ENCODE measurements at regions of chr17 and their contacts with region 1.

Region 1: GRCh38 chr17:76726231-76726775 is at the start of gene JMJD6:
- DNase-seq: peak in 11 of 14 experiments; percentile 88 to 98 (median 92)
- ATAC-seq: peak; percentile 81
- H3K4me3 ChIP-seq: peak within 1 kb of the TSS; percentile 77
- H3K4me3 Mint-ChIP-seq: peak within 1 kb of the TSS; percentile 100
- H3K27ac ChIP-seq: peak within 1 kb of the TSS; percentile 93 to 97
- H3K27ac Mint-ChIP-seq: peak within 1 kb of the TSS; percentile 99
- H3K4me1 ChIP-seq: peaks cover 80% of the 10 kb centered on the region
- H3K4me1 Mint-ChIP-seq: peaks cover 50% of the 10 kb centered on the region
- H3K27me3 ChIP-seq: no peaks in the 10 kb centered on the region
- H3K27me3 Mint-ChIP-seq: no peaks in the 10 kb centered on the region
- CTCF ChIP-seq: no peak
- total RNA-seq, gene JMJD6: 133 to 134 TPM

Region 2: DNA sequence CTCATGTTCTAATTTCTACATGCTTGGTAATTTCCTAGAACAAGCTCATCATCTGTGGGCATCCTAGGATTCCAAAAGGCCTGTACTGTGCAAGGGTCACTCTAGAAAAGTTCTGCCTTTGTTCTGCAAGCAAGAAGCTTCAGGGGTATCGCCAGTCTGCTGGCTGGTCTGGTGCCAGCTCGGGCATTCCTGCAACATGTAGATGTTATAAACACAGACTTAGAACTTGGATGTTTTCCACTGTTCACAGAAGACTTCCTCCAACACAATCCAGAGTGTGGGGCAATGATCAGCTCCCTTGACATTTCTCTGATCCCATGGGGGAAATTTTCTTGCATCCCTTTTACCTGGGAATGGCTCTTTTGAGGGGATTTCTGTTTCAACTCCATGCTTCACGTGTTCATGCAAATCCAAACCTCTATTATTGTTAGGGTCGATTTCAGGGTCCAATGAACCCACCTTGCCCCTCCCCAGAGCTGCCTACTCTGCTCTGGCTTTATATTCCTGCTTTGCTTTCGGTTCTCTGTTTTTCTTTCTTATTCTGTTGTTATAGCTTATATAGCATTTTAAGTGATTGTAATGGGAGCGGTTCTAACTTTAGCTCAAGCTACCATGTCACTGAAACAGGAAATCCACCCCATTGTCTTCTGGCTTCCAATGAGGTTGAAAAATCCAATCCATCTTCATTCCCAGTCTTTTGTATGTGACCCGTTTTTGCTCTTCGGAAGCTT is 298.6 kb before region 1 on chr17:
- CTCF ChIA-PET with region 1: no interaction called
- POLR2A ChIA-PET with region 1: no interaction called
- intact Hi-C with region 1: no loop called
- DNase-seq: no peak
- ATAC-seq: no peak
- H3K4me3 ChIP-seq: no peak overlapping the region
- H3K4me3 Mint-ChIP-seq: no peak overlapping the region
- H3K27ac ChIP-seq: no peak overlapping the region
- H3K27ac Mint-ChIP-seq: no peak overlapping the region
- H3K4me1 ChIP-seq: no peaks in the 10 kb centered on the region
- H3K4me1 Mint-ChIP-seq: peaks cover 26% of the 10 kb centered on the region
- H3K27me3 ChIP-seq: no peaks in the 10 kb centered on the region
- H3K27me3 Mint-ChIP-seq: no peaks in the 10 kb centered on the region
- CTCF ChIP-seq: no peak

Region 3: DNA sequence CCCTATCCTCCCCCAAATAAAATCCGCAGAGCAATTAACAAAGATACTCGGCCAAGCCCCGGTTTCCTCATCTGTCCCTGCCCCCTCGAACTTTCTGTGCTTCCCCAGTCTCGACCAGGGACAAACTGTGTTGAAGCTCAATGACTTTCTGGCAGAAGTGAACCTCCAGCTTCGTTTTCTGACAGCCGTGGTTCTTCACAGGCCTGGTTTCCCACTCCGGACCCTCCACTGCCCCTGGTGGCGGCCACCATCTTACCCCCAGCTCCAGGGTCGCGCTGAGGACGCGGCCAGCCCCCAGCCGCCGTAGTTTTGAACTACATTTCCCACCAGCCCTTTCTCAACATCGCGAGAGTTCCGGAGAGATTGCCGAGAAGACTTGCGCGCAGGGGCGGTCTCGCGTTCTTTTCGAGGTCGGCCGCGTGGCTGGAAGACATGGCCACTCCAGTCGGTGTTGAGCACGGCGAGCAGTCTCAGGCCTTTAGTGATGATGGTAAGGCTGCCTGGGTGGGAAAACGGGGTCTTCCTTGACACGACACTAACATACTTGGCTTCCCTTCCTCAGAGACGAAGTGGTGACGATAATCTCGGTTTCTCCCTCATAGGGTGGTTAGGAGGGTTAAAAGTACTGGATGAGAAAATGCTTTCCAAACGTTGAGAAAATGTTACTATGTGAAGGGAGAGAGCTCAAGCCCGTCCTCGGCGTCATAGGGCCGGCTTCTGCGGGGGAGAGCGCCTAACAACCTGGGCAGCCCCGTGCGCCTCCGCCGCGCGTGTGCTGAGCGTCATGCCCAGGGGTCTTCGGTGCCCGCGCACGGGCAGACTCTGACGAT is 168.7 kb before region 1 on chr17:
- CTCF ChIA-PET with region 1: no interaction called
- POLR2A ChIA-PET with region 1: interaction called, 12 read pairs
- intact Hi-C with region 1: no loop called
- DNase-seq: peak; percentile 86 to 97 (median 90)
- ATAC-seq: peak; percentile 82
- H3K4me3 ChIP-seq: peak overlapping the region; percentile 95
- H3K4me3 Mint-ChIP-seq: peak overlapping the region; percentile 96
- H3K27ac ChIP-seq: peak overlapping the region; percentile 93 to 97
- H3K27ac Mint-ChIP-seq: peak overlapping the region; percentile 97
- H3K4me1 ChIP-seq: peaks cover 58% of the 10 kb centered on the region
- H3K4me1 Mint-ChIP-seq: peaks cover 58% of the 10 kb centered on the region
- H3K27me3 ChIP-seq: no peaks in the 10 kb centered on the region
- H3K27me3 Mint-ChIP-seq: no peaks in the 10 kb centered on the region
- CTCF ChIP-seq: peak; percentile 35

Region 4: GRCh38 chr17:76714822-76715495 is 11.3 kb before region 1 on chr17:
- CTCF ChIA-PET with region 1: interaction called, 34 read pairs
- POLR2A ChIA-PET with region 1: interaction called, 52 read pairs
- intact Hi-C with region 1: loop called in 1 of 2 experiments (anchors 1 kb)
- DNase-seq: peak; percentile 64 to 87 (median 79)
- ATAC-seq: no peak
- H3K4me3 ChIP-seq: no peak overlapping the region
- H3K4me3 Mint-ChIP-seq: peak overlapping the region; percentile 3
- H3K27ac ChIP-seq: no peak overlapping the region
- H3K27ac Mint-ChIP-seq: peak overlapping the region; percentile 96
- H3K4me1 ChIP-seq: peaks cover 33% of the 10 kb centered on the region
- H3K4me1 Mint-ChIP-seq: peaks cover 42% of the 10 kb centered on the region
- H3K27me3 ChIP-seq: no peaks in the 10 kb centered on the region
- H3K27me3 Mint-ChIP-seq: no peaks in the 10 kb centered on the region
- CTCF ChIP-seq: peak; percentile 88

Region 5: DNA sequence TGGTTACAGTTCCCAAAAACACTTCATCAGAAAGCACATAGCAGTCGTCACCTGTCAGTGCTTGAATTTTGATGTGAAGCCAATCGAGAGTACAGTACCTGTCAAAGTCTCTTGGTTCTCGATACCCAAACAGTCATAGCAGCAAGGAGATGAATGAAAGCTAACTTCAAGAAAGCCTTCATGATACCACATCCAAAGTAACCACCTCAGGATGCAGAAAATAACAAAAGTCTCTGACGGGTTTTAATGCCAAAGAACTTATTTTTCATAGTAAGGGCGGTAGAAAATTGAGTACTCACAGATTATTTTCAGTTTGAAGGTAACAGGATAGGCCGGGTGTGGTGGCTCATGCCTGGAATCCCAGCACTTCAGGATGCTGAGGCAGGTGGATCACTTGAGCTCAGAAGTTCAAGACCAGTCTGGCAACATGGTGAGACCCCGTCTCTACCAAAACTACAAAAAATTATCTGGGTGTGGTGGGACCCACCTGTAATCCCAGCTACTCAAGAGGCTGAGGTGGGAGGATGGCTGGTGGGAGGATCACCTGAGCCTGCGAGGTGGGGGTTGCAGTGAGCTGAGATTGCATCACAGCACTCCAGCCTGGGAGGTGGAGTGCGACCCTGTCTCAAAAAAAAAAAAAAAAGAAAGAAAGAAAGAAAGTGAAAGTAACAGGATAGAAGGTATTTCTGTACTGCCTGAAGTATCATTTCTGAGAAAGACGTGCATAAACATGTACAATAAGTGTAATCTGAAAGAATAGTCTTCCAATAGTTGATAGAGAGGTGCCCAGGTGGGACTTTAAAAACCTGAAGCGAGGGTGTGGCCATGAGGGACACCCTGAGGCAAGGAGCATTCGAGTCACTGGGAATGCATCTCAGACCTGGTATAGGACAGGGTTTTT is 27.0 kb after region 1 on chr17:
- CTCF ChIA-PET with region 1: interaction called, 4 read pairs
- POLR2A ChIA-PET with region 1: interaction called, 31 read pairs
- intact Hi-C with region 1: no loop called
- DNase-seq: peak in 10 of 14 experiments; percentile 14 to 81 (median 30)
- ATAC-seq: peak; percentile 87
- H3K4me3 ChIP-seq: peak overlapping the region; percentile 54
- H3K4me3 Mint-ChIP-seq: peak overlapping the region; percentile 84
- H3K27ac ChIP-seq: peak overlapping the region; percentile 82 to 84
- H3K27ac Mint-ChIP-seq: peak overlapping the region; percentile 96
- H3K4me1 ChIP-seq: peaks cover 34% of the 10 kb centered on the region
- H3K4me1 Mint-ChIP-seq: peaks cover 24% of the 10 kb centered on the region
- H3K27me3 ChIP-seq: no peaks in the 10 kb centered on the region
- H3K27me3 Mint-ChIP-seq: no peaks in the 10 kb centered on the region
- CTCF ChIP-seq: no peak

Region 6: GRCh38 chr17:76816590-76817135 is 90.4 kb after region 1 on chr17:
- CTCF ChIA-PET with region 1: no interaction called
- POLR2A ChIA-PET with region 1: no interaction called
- intact Hi-C with region 1: loop called in 1 of 2 experiments (anchors 1 kb)
- DNase-seq: peak; percentile 43 to 77 (median 56)
- ATAC-seq: peak; percentile 98
- H3K4me3 ChIP-seq: no peak overlapping the region
- H3K4me3 Mint-ChIP-seq: no peak overlapping the region
- H3K27ac ChIP-seq: no peak overlapping the region
- H3K27ac Mint-ChIP-seq: no peak overlapping the region
- H3K4me1 ChIP-seq: peaks cover 7% of the 10 kb centered on the region
- H3K4me1 Mint-ChIP-seq: peaks cover 9% of the 10 kb centered on the region
- H3K27me3 ChIP-seq: no peaks in the 10 kb centered on the region
- H3K27me3 Mint-ChIP-seq: no peaks in the 10 kb centered on the region
- CTCF ChIP-seq: peak; percentile 71

Region 7: DNA sequence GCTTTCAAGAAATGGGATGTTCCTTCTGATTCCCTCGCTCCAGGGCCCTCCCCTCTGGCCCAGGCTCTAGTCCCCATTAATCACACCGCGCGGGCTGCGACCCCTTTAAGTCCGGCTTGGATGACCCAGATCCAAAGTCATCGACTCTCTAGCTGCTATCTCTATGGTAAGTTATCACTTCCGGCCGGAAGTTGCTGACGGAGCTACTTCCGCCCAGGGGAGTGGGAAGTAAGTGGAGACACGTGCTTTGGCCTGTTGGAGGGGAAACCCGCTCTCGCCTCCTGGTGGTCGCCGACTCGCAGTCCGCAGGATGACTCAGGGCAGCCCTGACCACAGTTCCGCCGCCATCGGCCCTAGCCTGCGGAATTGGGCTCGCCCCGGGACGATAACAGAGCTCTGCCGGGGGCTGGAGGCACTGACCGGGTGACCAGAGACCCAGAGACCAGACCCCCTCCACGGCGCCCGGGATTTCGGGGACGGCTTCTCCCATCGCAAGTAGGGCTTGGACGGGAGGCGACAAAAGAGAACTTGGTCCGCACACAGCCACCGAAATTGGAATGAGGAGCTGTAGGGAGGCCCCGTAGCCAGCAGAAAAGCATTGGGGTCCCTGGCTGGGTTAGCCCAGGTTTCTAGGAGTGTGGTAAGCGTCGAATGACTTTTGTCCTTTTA is 362.3 kb after region 1 on chr17:
- CTCF ChIA-PET with region 1: interaction called, 3 read pairs
- POLR2A ChIA-PET with region 1: no interaction called
- intact Hi-C with region 1: loop called in 1 of 2 experiments (anchors 5 kb)
- DNase-seq: peak; percentile 68 to 95 (median 80)
- ATAC-seq: peak; percentile 87
- H3K4me3 ChIP-seq: peak overlapping the region; percentile 98
- H3K4me3 Mint-ChIP-seq: peak overlapping the region; percentile 99
- H3K27ac ChIP-seq: peak overlapping the region; percentile 70 to 95
- H3K27ac Mint-ChIP-seq: peak overlapping the region; percentile 95
- H3K4me1 ChIP-seq: peaks cover 49% of the 10 kb centered on the region
- H3K4me1 Mint-ChIP-seq: peaks cover 44% of the 10 kb centered on the region
- H3K27me3 ChIP-seq: no peaks in the 10 kb centered on the region
- H3K27me3 Mint-ChIP-seq: no peaks in the 10 kb centered on the region
- CTCF ChIP-seq: peak; percentile 57

Measured in CD4-positive, alpha-beta T cell (primary cell).